HCT116 (cell line): ENCODE measurements at regions of chrX and their contacts with region 1.

Region 1: GRCh38 chrX:40651620-40652223 is 4.4 kb upstream of the CXorf38 start:
- DNase-seq: peak; percentile 45
- ATAC-seq: no peak
- H3K4me3 ChIP-seq: no peak overlapping the region
- H3K27ac ChIP-seq: no peak overlapping the region
- H3K4me1 ChIP-seq: peaks cover 4 to 6% of the 10 kb centered on the region in 2 experiments; a peak in 2 of 4 replicates
- H3K27me3 ChIP-seq: no peaks in the 10 kb centered on the region
- CTCF ChIP-seq: peak; percentile 50 to 62 (median 50); a peak in 5 of 6 replicates
- POLR2A ChIP-seq: no peak
- RAD21 ChIP-seq: peak; percentile 71

Region 2: DNA sequence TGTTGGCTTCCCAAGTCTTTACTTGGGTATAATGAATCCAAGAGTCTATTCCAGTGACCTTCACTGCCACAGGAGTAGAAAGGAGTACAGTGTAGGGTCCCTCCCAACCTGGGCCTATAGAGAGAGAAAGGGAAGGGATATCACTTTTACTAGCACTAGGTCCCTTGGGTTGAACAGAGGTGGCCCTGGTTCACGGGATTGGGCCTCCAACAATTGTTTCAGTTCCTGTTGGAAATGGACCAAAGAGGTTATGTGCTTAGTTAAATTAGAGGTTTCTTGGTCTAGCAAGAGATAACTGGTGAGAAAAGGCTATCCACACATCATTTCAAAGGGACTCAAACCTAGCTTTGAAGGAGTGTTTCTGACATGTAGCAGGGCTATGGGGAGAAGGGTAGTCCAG is 140.7 kb after region 1 on chrX:
- CTCF ChIA-PET with region 1: interaction called, 18 read pairs
- POLR2A ChIA-PET with region 1: no interaction called
- RAD21 ChIA-PET with region 1: interaction called, 3 to 8 read pairs
- intact Hi-C with region 1: loop called (anchors 1 kb)
- DNase-seq: no peak
- ATAC-seq: no peak
- H3K4me3 ChIP-seq: no peak overlapping the region
- H3K27ac ChIP-seq: no peak overlapping the region
- H3K4me1 ChIP-seq: peaks cover 4 to 14% of the 10 kb centered on the region in 2 experiments; a peak in 3 of 4 replicates
- H3K27me3 ChIP-seq: no peaks in the 10 kb centered on the region
- CTCF ChIP-seq: no peak
- POLR2A ChIP-seq: no peak
- RAD21 ChIP-seq: no peak

Region 3: DNA sequence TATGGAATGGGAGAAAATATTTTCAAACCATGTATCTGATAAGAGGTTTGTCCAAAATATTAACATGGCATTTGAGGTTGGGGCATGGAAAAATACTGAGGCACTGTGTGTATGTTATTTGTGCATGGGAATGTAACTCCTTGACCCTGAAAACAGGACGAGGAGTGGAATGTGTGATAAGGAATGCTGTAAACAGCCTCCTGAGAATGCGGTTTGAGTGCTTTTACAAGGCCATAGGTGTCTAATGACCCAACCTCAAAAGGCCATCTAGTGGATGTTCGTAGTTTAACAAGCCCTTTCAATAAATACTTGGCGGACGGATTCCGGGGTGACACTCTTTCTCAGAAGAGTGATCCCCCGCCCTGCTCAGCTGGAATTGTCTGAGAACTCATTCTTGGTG is 270.6 kb after region 1 on chrX:
- CTCF ChIA-PET with region 1: interaction called, 11 read pairs
- POLR2A ChIA-PET with region 1: no interaction called
- RAD21 ChIA-PET with region 1: interaction called in 1 of 2 experiments, 4 read pairs
- intact Hi-C with region 1: loop called (anchors 2 kb)
- DNase-seq: peak; percentile 56
- ATAC-seq: peak; percentile 83
- H3K4me3 ChIP-seq: no peak overlapping the region
- H3K27ac ChIP-seq: no peak overlapping the region
- H3K4me1 ChIP-seq: peaks cover 0 to 7% of the 10 kb centered on the region in 2 experiments; a peak in 2 of 4 replicates
- H3K27me3 ChIP-seq: no peaks in the 10 kb centered on the region
- CTCF ChIP-seq: peak; percentile 41 to 45 (median 44); a peak in 4 of 6 replicates
- POLR2A ChIP-seq: no peak
- RAD21 ChIP-seq: peak; percentile 69

Region 4: GRCh38 chrX:41116948-41117347 is 465.2 kb after region 1 on chrX:
- CTCF ChIA-PET with region 1: interaction called, 12 read pairs
- POLR2A ChIA-PET with region 1: no interaction called
- RAD21 ChIA-PET with region 1: interaction called in 1 of 2 experiments, 3 read pairs
- intact Hi-C with region 1: loop called (anchors 10 kb)
- DNase-seq: no peak
- ATAC-seq: no peak
- H3K4me3 ChIP-seq: no peak overlapping the region
- H3K27ac ChIP-seq: no peak overlapping the region
- H3K4me1 ChIP-seq: peaks cover 7 to 20% of the 10 kb centered on the region in 2 experiments
- H3K27me3 ChIP-seq: no peaks in the 10 kb centered on the region
- CTCF ChIP-seq: no peak
- POLR2A ChIP-seq: no peak
- RAD21 ChIP-seq: no peak